ENCODE measurements at regions of chr6 and their contacts with region 1.

Region 1: GRCh38 chr6:31079656-31080261 is 32.6 kb downstream of the C6orf15 start:
- DNase-seq: peak; percentile 74 to 84
- H3K4me3 ChIP-seq: no peak overlapping the region
- H3K4me1 ChIP-seq: peaks cover 2% of the 10 kb centered on the region; the same call in 1 of the 2 replicates
- H3K27me3 ChIP-seq: no peaks in the 10 kb centered on the region

Region 2: GRCh38 chr6:30742316-30743098 is 337.3 kb before region 1 on chr6 and contains the start of gene FLOT1:
- in situ Hi-C with region 1: loop called (anchors 10 kb)
- DNase-seq: peak; percentile 84 to 97
- H3K4me3 ChIP-seq: peak within 1 kb of the TSS; percentile 78
- H3K4me1 ChIP-seq: peaks cover 10% of the 10 kb centered on the region
- H3K27me3 ChIP-seq: no peaks in the 10 kb centered on the region

Region 3: GRCh38 chr6:30828027-30828960 is 251.5 kb before region 1 on chr6:
- in situ Hi-C with region 1: loop called (anchors 5 kb)
- DNase-seq: peak; percentile 50 to 93
- H3K4me3 ChIP-seq: no peak overlapping the region
- H3K4me1 ChIP-seq: peaks cover 3% of the 10 kb centered on the region
- H3K27me3 ChIP-seq: no peaks in the 10 kb centered on the region

Region 4: DNA sequence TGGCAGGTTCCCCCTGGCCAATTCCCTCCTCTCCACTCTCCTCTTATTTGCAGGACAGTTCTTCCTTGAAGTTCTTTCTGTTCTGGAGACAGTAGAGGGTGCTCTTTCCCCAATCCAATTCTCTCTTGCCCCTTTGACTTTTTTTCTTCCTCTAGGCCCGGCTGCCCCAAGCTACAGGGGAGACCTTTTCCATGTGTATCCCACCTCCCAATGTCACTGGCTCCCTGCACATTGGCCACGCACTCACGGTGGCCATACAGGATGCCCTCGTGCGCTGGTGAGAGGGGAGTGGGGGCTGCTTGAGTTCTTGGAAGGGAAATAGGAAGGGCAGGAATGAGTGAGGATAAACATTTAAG is 164.2 kb before region 1 on chr6:
- in situ Hi-C with region 1: loop called (anchors 5 kb)
- DNase-seq: peak; percentile 55 to 75
- H3K4me3 ChIP-seq: no peak overlapping the region
- H3K4me1 ChIP-seq: peaks cover 20% of the 10 kb centered on the region
- H3K27me3 ChIP-seq: no peaks in the 10 kb centered on the region

Measured in HAP-1 (cell line).